ENCODE measurements at regions of chr1 and their contacts with region 1.

Region 1: DNA sequence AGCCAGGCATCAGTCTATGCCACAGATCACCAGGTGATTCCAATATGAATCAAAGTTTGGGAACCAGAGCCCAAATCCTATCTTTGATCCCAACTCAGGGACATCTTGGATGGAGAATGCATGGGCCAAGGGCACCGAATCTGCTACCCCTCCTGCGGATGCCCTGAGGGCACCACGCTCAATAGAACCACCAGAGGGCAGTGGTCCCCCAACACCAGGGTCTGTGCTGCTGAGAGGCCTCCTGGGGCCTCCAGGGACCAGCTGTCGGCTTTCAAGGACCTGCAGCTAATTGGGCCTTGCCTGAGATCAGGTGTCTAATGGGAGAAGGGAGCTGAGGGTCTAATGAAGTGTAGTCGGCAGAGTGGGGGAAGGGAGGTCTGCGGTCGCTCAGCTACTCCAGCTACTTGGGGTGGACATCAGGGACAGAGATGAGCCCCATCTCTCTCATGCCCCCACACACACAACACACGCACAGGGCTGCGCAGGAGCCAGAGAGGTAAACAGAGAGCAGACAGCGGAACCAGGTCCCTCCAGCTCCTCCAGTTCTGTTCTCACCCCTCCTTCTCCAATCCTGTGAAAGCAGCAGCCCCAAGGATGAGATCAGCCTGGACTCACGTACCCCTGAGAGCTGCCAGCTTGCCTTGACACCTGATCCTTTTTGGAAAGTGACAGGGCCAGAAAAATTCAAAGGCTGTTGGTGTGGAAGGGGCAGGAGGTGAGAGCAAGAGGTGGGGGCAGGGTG is 34.9 kb upstream of the PPP1R15B start:
- DNase-seq: peak; percentile 90

Region 2: GRCh38 chr1:204494281-204495077 is 47.9 kb after region 1 on chr1 and contains the start of gene PIK3C2B:
- intact Hi-C with region 1: loop called in 1 of 2 experiments (anchors 5 kb)
- DNase-seq: peak; percentile 95
- total RNA-seq, gene PIK3C2B: 33.7 to 36.9 TPM

Region 3: GRCh38 chr1:204506961-204507387 is 60.4 kb after region 1 on chr1:
- intact Hi-C with region 1: loop called (anchors 2 to 5 kb)
- DNase-seq: peak; percentile 89

Measured in posterior vena cava (tissue), 2 donors.